Stomach (tissue), 19 donors: ENCODE measurements at regions of chr15 and their contacts with region 1.

Region 1: GRCh38 chr15:70722266-70723121 is 40.9 kb downstream of the UACA start:
- DNase-seq: peak in 1 of 2 donors; percentile 80
- H3K4me3 ChIP-seq: no peak overlapping the region
- H3K27ac ChIP-seq: no peak overlapping the region
- H3K4me1 ChIP-seq: peaks cover 1 to 61% (median 24%) of the 10 kb centered on the region in 4 donors
- H3K27me3 ChIP-seq: no peaks in the 10 kb centered on the region
- CTCF ChIP-seq: peak in 5 of 7 experiments; percentile 17 to 74 (median 60)
- EP300 ChIP-seq: no peak
- POLR2A ChIP-seq: no peak

Region 2: GRCh38 chr15:70775160-70775559 is 52.7 kb after region 1 on chr15:
- intact Hi-C with region 1: no loop called
- DNase-seq: no peak
- H3K4me3 ChIP-seq: no peak overlapping the region
- H3K27ac ChIP-seq: no peak overlapping the region
- H3K4me1 ChIP-seq: peaks cover 0 to 11% (median 3%) of the 10 kb centered on the region in 4 donors
- H3K27me3 ChIP-seq: no peaks in the 10 kb centered on the region
- CTCF ChIP-seq: no peak
- EP300 ChIP-seq: no peak
- POLR2A ChIP-seq: no peak

Region 3: DNA sequence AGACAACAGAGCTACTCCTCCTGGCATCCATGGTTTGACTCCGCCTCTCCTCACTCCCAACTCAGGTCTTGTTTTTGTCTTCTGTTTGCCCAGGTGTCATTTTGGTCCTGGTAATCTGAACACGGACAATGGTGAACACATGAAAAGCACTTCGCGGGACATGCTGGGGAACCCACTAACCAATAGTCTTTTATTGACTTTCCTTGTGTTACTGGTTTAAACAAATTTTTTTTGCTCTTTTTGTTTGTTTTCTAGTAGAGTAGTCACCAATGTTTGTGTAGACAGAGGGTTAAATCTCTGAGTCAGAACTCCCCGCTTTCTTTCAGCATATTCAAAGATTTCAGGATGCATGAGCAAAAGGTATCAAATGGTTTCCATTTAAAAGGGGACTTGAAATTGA is 93.2 kb after region 1 on chr15:
- intact Hi-C with region 1: loop called (anchors 5 kb)
- DNase-seq: peak in 1 of 2 donors; percentile 38
- H3K4me3 ChIP-seq: no peak overlapping the region
- H3K27ac ChIP-seq: no peak overlapping the region
- H3K4me1 ChIP-seq: peaks cover 0 to 7% (median 4%) of the 10 kb centered on the region in 4 donors
- H3K27me3 ChIP-seq: no peaks in the 10 kb centered on the region
- CTCF ChIP-seq: no peak
- EP300 ChIP-seq: no peak
- POLR2A ChIP-seq: no peak